ENCODE measurements at regions of chr11 and their contacts with region 1.

Region 1: GRCh38 chr11:14741195-14741594 is 97.6 kb downstream of the PDE3B start:
- DNase-seq: no peak
- ATAC-seq: no peak
- H3K4me3 ChIP-seq: no peak overlapping the region
- H3K4me3 Mint-ChIP-seq: no peak overlapping the region
- H3K27ac ChIP-seq: no peak overlapping the region
- H3K27ac Mint-ChIP-seq: peak overlapping the region; percentile 33
- H3K4me1 ChIP-seq: peaks cover 15% of the 10 kb centered on the region
- H3K4me1 Mint-ChIP-seq: peaks cover 68% of the 10 kb centered on the region
- H3K27me3 ChIP-seq: no peaks in the 10 kb centered on the region
- H3K27me3 Mint-ChIP-seq: no peaks in the 10 kb centered on the region
- CTCF ChIP-seq: no peak

Region 2: GRCh38 chr11:14751975-14752407 is 10.8 kb after region 1 on chr11:
- CTCF ChIA-PET with region 1: no interaction called
- POLR2A ChIA-PET with region 1: interaction called, 6 read pairs
- intact Hi-C with region 1: loop called in 1 of 2 experiments (anchors 1 kb)
- DNase-seq: no peak
- ATAC-seq: peak; percentile 39
- H3K4me3 ChIP-seq: no peak overlapping the region
- H3K4me3 Mint-ChIP-seq: peak overlapping the region; percentile 40
- H3K27ac ChIP-seq: no peak overlapping the region
- H3K27ac Mint-ChIP-seq: peak overlapping the region; percentile 83
- H3K4me1 ChIP-seq: peaks cover 52% of the 10 kb centered on the region
- H3K4me1 Mint-ChIP-seq: peaks cover 63% of the 10 kb centered on the region
- H3K27me3 ChIP-seq: no peaks in the 10 kb centered on the region
- H3K27me3 Mint-ChIP-seq: no peaks in the 10 kb centered on the region
- CTCF ChIP-seq: no peak

Region 3: GRCh38 chr11:15665368-15665871 is 924.2 kb after region 1 on chr11:
- CTCF ChIA-PET with region 1: no interaction called
- POLR2A ChIA-PET with region 1: no interaction called
- intact Hi-C with region 1: no loop called
- DNase-seq: no peak
- ATAC-seq: no peak
- H3K4me3 ChIP-seq: no peak overlapping the region
- H3K4me3 Mint-ChIP-seq: no peak overlapping the region
- H3K27ac ChIP-seq: no peak overlapping the region
- H3K27ac Mint-ChIP-seq: no peak overlapping the region
- H3K4me1 ChIP-seq: no peaks in the 10 kb centered on the region
- H3K4me1 Mint-ChIP-seq: no peaks in the 10 kb centered on the region
- H3K27me3 ChIP-seq: no peaks in the 10 kb centered on the region
- H3K27me3 Mint-ChIP-seq: peaks cover 8% of the 10 kb centered on the region
- CTCF ChIP-seq: no peak